IMR-90 (cell line): ENCODE measurements at regions of chr6 and their contacts with region 1.

Region 1: GRCh38 chr6:160202411-160202810 is 56.2 kb downstream of the SLC22A2 start:
- DNase-seq: no peak
- ATAC-seq: no peak
- H3K4me3 ChIP-seq: no peak overlapping the region
- H3K27ac ChIP-seq: no peak overlapping the region
- H3K4me1 ChIP-seq: no peaks in the 10 kb centered on the region
- H3K27me3 ChIP-seq: no peaks in the 10 kb centered on the region
- CTCF ChIP-seq: no peak
- POLR2A ChIP-seq: no peak
- RAD21 ChIP-seq: no peak

Region 2: DNA sequence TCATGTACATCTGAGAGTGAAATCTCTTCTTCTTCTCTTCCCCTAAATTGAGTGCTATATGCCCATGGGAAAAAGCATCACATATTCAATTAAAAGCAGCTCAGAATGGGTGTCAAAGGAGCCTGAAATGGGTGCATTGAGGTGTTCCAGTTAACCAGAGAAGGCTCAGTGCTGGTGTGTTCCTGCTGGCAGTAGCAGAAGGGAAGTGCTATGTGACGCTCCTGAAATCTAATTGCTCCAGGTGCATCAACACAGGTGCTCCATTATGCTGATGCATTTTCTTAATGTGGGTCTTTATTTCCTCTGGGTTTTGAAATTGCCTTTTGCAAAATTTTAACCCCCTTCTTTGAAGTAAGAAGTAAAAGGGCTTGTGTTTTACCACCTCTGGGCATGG is 38.3 kb after region 1 on chr6:
- CTCF ChIA-PET with region 1: no interaction called
- POLR2A ChIA-PET with region 1: no interaction called
- dilution Hi-C with region 1: no loop called
- in situ Hi-C with region 1: no loop called
- intact Hi-C with region 1: loop called (anchors 1 kb)
- DNase-seq: no peak
- ATAC-seq: no peak
- H3K4me3 ChIP-seq: no peak overlapping the region
- H3K27ac ChIP-seq: no peak overlapping the region
- H3K4me1 ChIP-seq: no peaks in the 10 kb centered on the region
- H3K27me3 ChIP-seq: no peaks in the 10 kb centered on the region
- CTCF ChIP-seq: no peak
- POLR2A ChIP-seq: no peak
- RAD21 ChIP-seq: no peak

Region 3: DNA sequence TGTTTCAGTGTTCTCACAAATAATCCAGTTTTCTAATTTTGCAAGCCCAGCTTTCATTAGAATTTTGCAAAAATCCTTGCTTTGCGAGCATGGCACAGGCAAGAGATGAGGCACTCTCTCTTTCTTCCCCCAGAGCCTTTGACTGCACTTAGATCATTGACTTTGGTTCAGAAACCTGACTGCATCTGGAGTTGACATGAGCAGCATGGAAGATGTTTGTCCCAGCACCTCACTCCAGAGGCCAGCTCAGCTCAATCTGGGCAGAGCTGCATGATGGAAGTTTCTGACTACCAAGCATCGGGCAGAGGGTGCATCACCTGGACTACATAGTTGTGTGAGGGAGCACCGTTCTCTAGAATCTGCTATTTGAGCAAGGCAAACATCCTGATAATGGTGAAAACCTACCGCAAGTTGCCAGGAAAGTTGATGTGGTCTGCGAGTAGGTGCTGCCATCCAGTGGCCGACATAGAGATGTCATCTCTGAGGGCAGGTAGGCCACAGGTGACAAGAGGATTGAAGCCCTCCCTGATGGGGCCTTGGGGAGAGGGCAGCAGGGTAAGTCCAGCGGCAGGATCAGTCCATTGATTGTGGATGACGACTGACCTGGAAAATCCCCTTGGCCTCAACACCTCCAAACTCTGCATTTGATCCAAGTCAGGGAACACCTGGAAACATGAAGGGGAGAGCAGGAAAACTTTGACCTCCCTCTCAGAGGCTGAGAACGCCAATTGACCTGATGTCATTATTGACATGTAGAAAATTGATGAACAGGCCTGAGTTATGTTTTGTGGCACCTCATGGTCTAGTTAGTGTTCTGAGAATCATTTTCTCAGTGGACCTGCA is 465.4 kb after region 1 on chr6:
- CTCF ChIA-PET with region 1: no interaction called
- POLR2A ChIA-PET with region 1: no interaction called
- dilution Hi-C with region 1: no loop called
- in situ Hi-C with region 1: no loop called
- intact Hi-C with region 1: no loop called
- DNase-seq: no peak
- ATAC-seq: no peak
- H3K4me3 ChIP-seq: no peak overlapping the region
- H3K27ac ChIP-seq: no peak overlapping the region
- H3K4me1 ChIP-seq: no peaks in the 10 kb centered on the region
- H3K27me3 ChIP-seq: no peaks in the 10 kb centered on the region
- CTCF ChIP-seq: no peak
- POLR2A ChIP-seq: no peak
- RAD21 ChIP-seq: no peak

Region 4: DNA sequence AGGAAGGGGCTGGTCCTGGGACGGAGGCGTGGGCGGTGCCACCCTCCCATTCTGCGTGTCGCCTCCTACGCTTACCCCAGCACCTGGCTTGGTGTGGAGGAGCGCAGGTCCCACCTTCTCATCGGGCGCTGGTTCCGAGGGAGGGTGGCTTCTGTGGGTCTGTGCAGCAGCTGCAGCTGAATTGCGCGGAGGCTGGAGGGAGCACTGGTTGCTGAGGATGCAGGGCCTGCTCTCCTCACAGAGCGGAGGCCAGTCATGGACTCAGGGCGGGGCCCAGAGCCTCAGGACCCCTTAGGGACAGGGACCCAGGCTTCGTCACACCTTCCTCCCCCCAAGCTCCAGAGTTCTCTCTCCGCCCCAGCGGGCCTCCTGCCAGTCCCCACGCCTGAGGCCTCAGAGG is 661.4 kb after region 1 on chr6:
- CTCF ChIA-PET with region 1: no interaction called
- POLR2A ChIA-PET with region 1: no interaction called
- dilution Hi-C with region 1: no loop called
- in situ Hi-C with region 1: no loop called
- intact Hi-C with region 1: no loop called
- DNase-seq: no peak
- ATAC-seq: no peak
- H3K4me3 ChIP-seq: no peak overlapping the region
- H3K27ac ChIP-seq: no peak overlapping the region
- H3K4me1 ChIP-seq: no peaks in the 10 kb centered on the region
- H3K27me3 ChIP-seq: no peaks in the 10 kb centered on the region
- CTCF ChIP-seq: no peak
- POLR2A ChIP-seq: no peak
- RAD21 ChIP-seq: no peak